ENCODE measurements at regions of chr10 and their contacts with region 1.

Region 1: GRCh38 chr10:34156781-34157425 is 658.2 kb downstream of the PARD3 start:
- DNase-seq: no peak
- ATAC-seq: peak in 2 of 8 donors; percentile 57 to 59
- H3K4me3 ChIP-seq: no peak overlapping the region
- H3K27ac ChIP-seq: no peak overlapping the region
- H3K4me1 ChIP-seq: peaks cover 0 to 9% (median 0%) of the 10 kb centered on the region in 9 donors
- H3K27me3 ChIP-seq: no peaks in the 10 kb centered on the region
- CTCF ChIP-seq: peak in 3 of 9 donors; percentile 11 to 28 (median 14)

Region 2: GRCh38 chr10:34092891-34093290 is 64.0 kb before region 1 on chr10:
- intact Hi-C with region 1: loop called in 1 of 10 experiments (anchors 10 kb)
- DNase-seq: no peak
- ATAC-seq: no peak
- H3K4me3 ChIP-seq: no peak overlapping the region
- H3K27ac ChIP-seq: no peak overlapping the region
- H3K4me1 ChIP-seq: no peaks in the 10 kb centered on the region
- H3K27me3 ChIP-seq: no peaks in the 10 kb centered on the region
- CTCF ChIP-seq: no peak

Region 3: GRCh38 chr10:34121781-34122628 is 34.9 kb before region 1 on chr10:
- intact Hi-C with region 1: no loop called
- DNase-seq: no peak
- ATAC-seq: peak in 3 of 8 donors; percentile 22 to 29 (median 23)
- H3K4me3 ChIP-seq: no peak overlapping the region
- H3K27ac ChIP-seq: no peak overlapping the region
- H3K4me1 ChIP-seq: peaks cover 0 to 23% (median 7%) of the 10 kb centered on the region in 9 donors
- H3K27me3 ChIP-seq: no peaks in the 10 kb centered on the region
- CTCF ChIP-seq: no peak

Region 4: DNA sequence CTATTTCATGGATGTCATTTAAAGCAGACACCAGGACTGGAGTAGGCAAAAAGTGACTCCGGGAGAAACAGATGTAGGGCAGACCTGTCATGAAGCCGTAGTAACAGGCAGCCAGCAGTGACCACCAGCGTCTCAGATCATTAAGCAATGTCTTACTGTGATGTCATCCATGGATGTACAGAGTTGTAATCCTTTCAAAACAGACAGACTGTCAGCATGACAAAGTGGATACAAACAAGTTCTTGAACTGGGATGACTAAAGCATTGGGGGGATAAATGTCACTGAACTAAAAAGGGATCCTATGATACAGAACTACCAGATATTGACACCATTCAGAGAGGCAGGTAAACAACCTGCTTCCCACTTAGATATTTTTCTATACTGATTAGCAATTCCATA is 17.3 kb before region 1 on chr10:
- intact Hi-C with region 1: loop called in 1 of 10 experiments (anchors 2 kb)
- DNase-seq: no peak
- ATAC-seq: peak in 1 of 8 donors; percentile 27
- H3K4me3 ChIP-seq: no peak overlapping the region
- H3K27ac ChIP-seq: no peak overlapping the region
- H3K4me1 ChIP-seq: peaks cover 0 to 6% (median 0%) of the 10 kb centered on the region in 9 donors
- H3K27me3 ChIP-seq: no peaks in the 10 kb centered on the region
- CTCF ChIP-seq: no peak